AG04450 (cell line): ENCODE measurements at regions of chr1 and their contacts with region 1.

Region 1: DNA sequence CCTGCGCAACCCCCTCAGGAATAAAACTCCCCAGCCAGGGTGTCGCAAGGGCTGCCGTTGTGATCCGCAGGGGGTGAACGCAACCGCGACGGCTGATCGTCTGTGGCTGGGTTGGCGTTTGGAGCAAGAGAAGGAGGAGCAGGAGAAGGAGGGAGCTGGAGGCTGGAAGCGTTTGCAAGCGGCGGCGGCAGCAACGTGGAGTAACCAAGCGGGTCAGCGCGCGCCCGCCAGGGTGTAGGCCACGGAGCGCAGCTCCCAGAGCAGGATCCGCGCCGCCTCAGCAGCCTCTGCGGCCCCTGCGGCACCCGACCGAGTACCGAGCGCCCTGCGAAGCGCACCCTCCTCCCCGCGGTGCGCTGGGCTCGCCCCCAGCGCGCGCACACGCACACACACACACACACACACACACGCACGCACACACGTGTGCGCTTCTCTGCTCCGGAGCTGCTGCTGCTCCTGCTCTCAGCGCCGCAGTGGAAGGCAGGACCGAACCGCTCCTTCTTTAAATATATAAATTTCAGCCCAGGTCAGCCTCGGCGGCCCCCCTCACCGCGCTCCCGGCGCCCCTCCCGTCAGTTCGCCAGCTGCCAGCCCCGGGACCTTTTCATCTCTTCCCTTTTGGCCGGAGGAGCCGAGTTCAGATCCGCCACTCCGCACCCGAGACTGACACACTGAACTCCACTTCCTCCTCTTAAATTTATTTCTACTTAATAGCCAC is 696 bp downstream of the TGFB2 start:
- DNase-seq: no peak
- H3K4me3 ChIP-seq: peak overlapping the region; percentile 75
- H3K27ac ChIP-seq: peak overlapping the region; percentile 80
- H3K27me3 ChIP-seq: no peaks in the 10 kb centered on the region
- CTCF ChIP-seq: no peak

Region 2: DNA sequence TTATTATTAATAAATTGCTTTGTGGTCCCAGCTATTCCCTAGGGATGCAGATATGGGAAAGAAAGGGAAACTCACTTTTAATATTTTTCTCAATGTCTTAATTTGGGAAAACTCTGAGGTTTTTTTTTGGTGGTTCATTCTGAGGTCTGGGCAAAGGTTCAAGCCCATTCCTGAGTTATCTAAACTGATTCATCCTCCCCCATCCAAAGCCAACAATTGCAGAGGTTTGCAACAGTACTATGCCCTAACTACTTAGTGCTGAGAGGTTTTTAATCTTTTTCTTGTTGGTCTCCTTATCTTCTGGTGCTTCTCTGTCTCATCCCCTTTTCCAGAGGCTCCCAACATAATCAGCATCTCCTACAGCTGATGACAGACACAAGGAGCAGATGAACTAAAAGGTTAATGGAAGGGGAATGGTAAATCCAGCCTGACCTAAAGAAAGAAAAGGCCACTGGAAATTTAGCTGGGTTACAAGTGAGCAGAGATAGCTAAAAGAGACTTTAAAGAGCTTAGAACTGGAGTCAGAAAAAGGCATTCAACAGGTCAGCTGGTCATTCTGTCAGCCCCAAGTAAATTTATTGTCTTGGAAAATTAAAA is 389.7 kb after region 1 on chr1:
- CTCF ChIA-PET with region 1: interaction called, 10 read pairs
- POLR2A ChIA-PET with region 1: no interaction called
- DNase-seq: no peak
- H3K4me3 ChIP-seq: no peak overlapping the region
- H3K27ac ChIP-seq: peak overlapping the region; percentile 62
- H3K27me3 ChIP-seq: no peaks in the 10 kb centered on the region
- CTCF ChIP-seq: no peak